PC-3 (cell line): ENCODE measurements at regions of chr15 and their contacts with region 1.

Region 1: GRCh38 chr15:39273717-39274411 is 307.0 kb upstream of the THBS1 start:
- DNase-seq: peak; percentile 100
- ATAC-seq: peak; percentile 83
- H3K4me3 ChIP-seq: peak overlapping the region; percentile 57
- H3K27ac ChIP-seq: peak overlapping the region; percentile 97
- H3K4me1 ChIP-seq: peaks cover 54% of the 10 kb centered on the region
- H3K27me3 ChIP-seq: no peaks in the 10 kb centered on the region
- CTCF ChIP-seq: no peak

Region 2: DNA sequence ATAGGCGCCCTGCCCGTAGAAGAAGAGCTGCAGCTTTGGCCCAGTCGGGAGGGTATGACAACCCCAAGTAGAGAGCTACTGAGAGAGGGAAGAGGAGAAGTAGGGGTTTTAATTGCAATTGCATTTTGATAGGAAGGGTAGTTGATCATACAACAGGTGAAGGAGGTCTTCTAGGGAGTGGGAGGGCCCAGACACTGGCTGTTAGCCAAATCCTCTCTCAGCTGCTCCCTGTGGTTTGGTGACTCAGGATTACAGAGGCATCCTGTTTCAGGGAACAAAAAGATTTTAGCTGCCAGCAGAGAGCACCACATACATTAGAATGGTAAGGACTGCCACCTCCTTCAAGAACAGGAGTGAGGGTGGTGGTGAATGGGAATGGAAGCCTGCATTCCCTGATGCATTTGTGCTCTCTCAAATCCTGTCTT is 101.9 kb before region 1 on chr15:
- CTCF ChIA-PET with region 1: no interaction called
- POLR2A ChIA-PET with region 1: no interaction called
- intact Hi-C with region 1: loop called (anchors 1 kb)
- DNase-seq: peak; percentile 98
- ATAC-seq: peak; percentile 99
- H3K4me3 ChIP-seq: no peak overlapping the region
- H3K27ac ChIP-seq: peak overlapping the region; percentile 77
- H3K4me1 ChIP-seq: peaks cover 25% of the 10 kb centered on the region
- H3K27me3 ChIP-seq: no peaks in the 10 kb centered on the region
- CTCF ChIP-seq: peak; percentile 81

Region 3: GRCh38 chr15:39195988-39196486 is 77.8 kb before region 1 on chr15:
- CTCF ChIA-PET with region 1: no interaction called
- POLR2A ChIA-PET with region 1: interaction called, 5 read pairs
- intact Hi-C with region 1: loop called (anchors 1 kb)
- DNase-seq: peak; percentile 100
- ATAC-seq: peak; percentile 88
- H3K4me3 ChIP-seq: no peak overlapping the region
- H3K27ac ChIP-seq: peak overlapping the region; percentile 86
- H3K4me1 ChIP-seq: peaks cover 82% of the 10 kb centered on the region
- H3K27me3 ChIP-seq: no peaks in the 10 kb centered on the region
- CTCF ChIP-seq: no peak

Region 4: GRCh38 chr15:39242345-39242744 is 31.5 kb before region 1 on chr15:
- CTCF ChIA-PET with region 1: no interaction called
- POLR2A ChIA-PET with region 1: no interaction called
- intact Hi-C with region 1: loop called (anchors 1 kb)
- DNase-seq: peak; percentile 83
- ATAC-seq: peak; percentile 59
- H3K4me3 ChIP-seq: no peak overlapping the region
- H3K27ac ChIP-seq: peak overlapping the region; percentile 68
- H3K4me1 ChIP-seq: peaks cover 59% of the 10 kb centered on the region
- H3K27me3 ChIP-seq: no peaks in the 10 kb centered on the region
- CTCF ChIP-seq: no peak

Region 5: GRCh38 chr15:39301589-39301999 is 27.7 kb after region 1 on chr15:
- CTCF ChIA-PET with region 1: no interaction called
- POLR2A ChIA-PET with region 1: no interaction called
- intact Hi-C with region 1: no loop called
- DNase-seq: peak; percentile 53
- ATAC-seq: peak; percentile 21; the same call in 1 of the 2 replicates
- H3K4me3 ChIP-seq: no peak overlapping the region
- H3K27ac ChIP-seq: peak overlapping the region; percentile 46
- H3K4me1 ChIP-seq: peaks cover 30% of the 10 kb centered on the region
- H3K27me3 ChIP-seq: no peaks in the 10 kb centered on the region
- CTCF ChIP-seq: no peak

Region 6: GRCh38 chr15:39358441-39359041 is 84.7 kb after region 1 on chr15:
- CTCF ChIA-PET with region 1: no interaction called
- POLR2A ChIA-PET with region 1: no interaction called
- intact Hi-C with region 1: no loop called
- DNase-seq: peak; percentile 75
- ATAC-seq: peak; percentile 74
- H3K4me3 ChIP-seq: no peak overlapping the region
- H3K27ac ChIP-seq: peak overlapping the region; percentile 19; the same call in 1 of the 2 replicates
- H3K4me1 ChIP-seq: peaks cover 23% of the 10 kb centered on the region
- H3K27me3 ChIP-seq: no peaks in the 10 kb centered on the region
- CTCF ChIP-seq: no peak

Region 7: GRCh38 chr15:39453500-39454073 is 179.7 kb after region 1 on chr15:
- CTCF ChIA-PET with region 1: no interaction called
- POLR2A ChIA-PET with region 1: no interaction called
- intact Hi-C with region 1: loop called (anchors 1 kb)
- DNase-seq: no peak
- ATAC-seq: no peak
- H3K4me3 ChIP-seq: no peak overlapping the region
- H3K27ac ChIP-seq: no peak overlapping the region
- H3K4me1 ChIP-seq: peaks cover 21% of the 10 kb centered on the region
- H3K27me3 ChIP-seq: no peaks in the 10 kb centered on the region
- CTCF ChIP-seq: no peak